ENCODE measurements at regions of chr1 and their contacts with region 1.

Region 1: GRCh38 chr1:201559679-201560162 is 20.8 kb downstream of the NAV1 start:
- DNase-seq: peak; percentile 76 to 84 (median 80)
- ATAC-seq: peak; percentile 96 to 98 (median 97)
- H3K4me3 ChIP-seq: no peak overlapping the region
- H3K27ac ChIP-seq: no peak overlapping the region
- H3K4me1 ChIP-seq: no peaks in the 10 kb centered on the region
- H3K27me3 ChIP-seq: no peaks in the 10 kb centered on the region
- CTCF ChIP-seq: peak; percentile 93 to 96 (median 94)
- POLR2A ChIP-seq: no peak

Region 2: GRCh38 chr1:201224666-201225370 is 334.9 kb before region 1 on chr1:
- intact Hi-C with region 1: no loop called
- DNase-seq: peak in 1 of 3 donors; percentile 24
- ATAC-seq: no peak
- H3K4me3 ChIP-seq: no peak overlapping the region
- H3K27ac ChIP-seq: no peak overlapping the region
- H3K4me1 ChIP-seq: peaks cover 0 to 13% (median 5%) of the 10 kb centered on the region in 4 donors
- H3K27me3 ChIP-seq: no peaks in the 10 kb centered on the region
- CTCF ChIP-seq: no peak
- POLR2A ChIP-seq: no peak

Region 3: GRCh38 chr1:201444792-201445191 is 114.9 kb before region 1 on chr1:
- intact Hi-C with region 1: no loop called
- DNase-seq: no peak
- ATAC-seq: no peak
- H3K4me3 ChIP-seq: no peak overlapping the region
- H3K27ac ChIP-seq: no peak overlapping the region
- H3K4me1 ChIP-seq: no peaks in the 10 kb centered on the region
- H3K27me3 ChIP-seq: no peaks in the 10 kb centered on the region
- CTCF ChIP-seq: no peak
- POLR2A ChIP-seq: no peak

Region 4: GRCh38 chr1:201703621-201704439 is 144.1 kb after region 1 on chr1:
- intact Hi-C with region 1: loop called in 1 of 2 experiments (anchors 2 kb)
- DNase-seq: peak; percentile 80 to 85 (median 83)
- ATAC-seq: peak; percentile 95 to 99 (median 98)
- H3K4me3 ChIP-seq: no peak overlapping the region
- H3K27ac ChIP-seq: no peak overlapping the region
- H3K4me1 ChIP-seq: no peaks in the 10 kb centered on the region
- H3K27me3 ChIP-seq: no peaks in the 10 kb centered on the region
- CTCF ChIP-seq: peak; percentile 95 to 98 (median 98)
- POLR2A ChIP-seq: no peak

Region 5: DNA sequence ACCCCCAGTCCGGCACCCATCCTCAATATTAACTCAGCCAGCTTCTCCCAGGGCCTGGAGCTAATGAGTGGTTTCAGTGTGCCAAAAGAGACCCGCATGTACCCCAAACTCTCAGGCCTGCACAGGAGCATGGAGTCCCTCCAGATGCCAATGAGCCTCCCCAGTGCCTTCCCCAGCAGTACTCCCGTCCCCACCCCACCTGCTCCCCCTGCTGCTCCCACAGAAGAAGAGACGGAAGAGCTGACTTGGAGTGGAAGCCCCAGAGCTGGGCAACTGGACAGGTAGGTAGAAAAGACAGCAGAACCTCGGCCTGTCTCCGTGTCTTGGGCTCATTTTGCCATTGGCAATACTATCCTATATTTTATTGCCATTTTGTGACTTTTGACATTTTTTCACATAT is 223.9 kb after region 1 on chr1:
- intact Hi-C with region 1: loop called (anchors 10 kb)
- DNase-seq: no peak
- ATAC-seq: no peak
- H3K4me3 ChIP-seq: no peak overlapping the region
- H3K27ac ChIP-seq: no peak overlapping the region
- H3K4me1 ChIP-seq: no peaks in the 10 kb centered on the region
- H3K27me3 ChIP-seq: no peaks in the 10 kb centered on the region
- CTCF ChIP-seq: no peak
- POLR2A ChIP-seq: no peak

Measured in right lobe of liver (tissue), 6 donors.